ENCODE measurements at regions of chr3 and their contacts with region 1.

Region 1: GRCh38 chr3:186097663-186098451 is 11.0 kb downstream of the ETV5 start:
- H3K4me3 Mint-ChIP-seq: peak overlapping the region; percentile 61
- H3K27ac Mint-ChIP-seq: peak overlapping the region; percentile 100
- H3K4me1 Mint-ChIP-seq: peaks cover 61% of the 10 kb centered on the region
- H3K27me3 Mint-ChIP-seq: peaks cover 31% of the 10 kb centered on the region

Region 2: GRCh38 chr3:186108941-186109865 is 11.3 kb after region 1 on chr3 and contains the start of gene ETV5:
- intact Hi-C with region 1: loop called (anchors 1 kb)
- H3K4me3 Mint-ChIP-seq: peak within 1 kb of the TSS; percentile 85
- H3K27ac Mint-ChIP-seq: peak within 1 kb of the TSS; percentile 89
- H3K4me1 Mint-ChIP-seq: peaks cover 52% of the 10 kb centered on the region
- H3K27me3 Mint-ChIP-seq: peaks cover 73% of the 10 kb centered on the region

Region 3: GRCh38 chr3:186152889-186153292 is 55.0 kb after region 1 on chr3:
- intact Hi-C with region 1: loop called (anchors 2 kb)
- H3K4me3 Mint-ChIP-seq: no peak overlapping the region
- H3K27ac Mint-ChIP-seq: peak overlapping the region; percentile 65
- H3K4me1 Mint-ChIP-seq: peaks cover 39% of the 10 kb centered on the region
- H3K27me3 Mint-ChIP-seq: peaks cover 20% of the 10 kb centered on the region

Region 4: GRCh38 chr3:186185194-186185787 is 87.4 kb after region 1 on chr3:
- intact Hi-C with region 1: loop called (anchors 1 kb)
- H3K4me3 Mint-ChIP-seq: peak overlapping the region; percentile 22
- H3K27ac Mint-ChIP-seq: peak overlapping the region; percentile 85
- H3K4me1 Mint-ChIP-seq: peaks cover 68% of the 10 kb centered on the region
- H3K27me3 Mint-ChIP-seq: no peaks in the 10 kb centered on the region

Region 5: DNA sequence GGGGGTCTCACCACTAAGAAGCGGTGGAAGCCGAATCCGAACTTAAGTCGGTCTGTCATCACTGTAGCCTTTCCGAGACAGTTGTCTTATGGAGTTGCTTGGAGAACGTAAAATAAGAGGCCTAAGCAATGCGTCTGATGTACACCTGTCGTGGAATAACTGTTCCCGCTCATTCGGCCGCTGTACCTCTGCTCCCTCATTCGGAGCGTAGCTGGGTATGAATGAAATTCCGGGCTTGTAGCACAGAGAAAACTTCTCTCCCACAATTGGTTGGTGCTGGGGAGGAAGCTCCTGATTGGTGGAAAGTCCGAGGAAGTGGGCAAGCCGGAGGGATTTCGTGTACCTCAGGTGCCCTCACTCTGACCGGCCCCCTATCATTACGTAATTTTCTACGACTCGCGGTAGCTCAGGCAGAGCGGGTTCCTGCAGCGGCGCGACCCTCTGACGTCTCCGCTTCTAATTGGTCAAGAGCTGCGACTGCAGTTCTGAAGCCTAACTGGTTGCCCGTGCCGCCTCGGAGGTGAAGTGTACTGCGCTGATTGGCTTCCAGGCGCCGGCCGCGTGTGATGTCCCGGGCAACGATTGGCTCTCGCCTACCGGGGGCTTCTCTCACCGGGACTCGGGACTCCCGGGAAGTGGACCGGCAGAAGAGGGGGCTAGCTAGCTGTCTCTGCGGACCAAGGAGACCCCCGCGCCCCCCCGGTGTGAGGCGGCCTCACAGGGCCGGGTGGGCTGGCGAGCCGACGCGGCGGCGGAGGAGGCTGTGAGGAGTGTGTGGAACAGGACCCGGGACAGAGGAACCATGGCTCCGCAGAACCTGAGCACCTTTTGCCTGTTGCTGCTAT is 472.5 kb after region 1 on chr3 and contains the start of gene DNAJB11:
- intact Hi-C with region 1: loop called (anchors 10 kb)
- H3K4me3 Mint-ChIP-seq: peak within 1 kb of the TSS; percentile 86
- H3K27ac Mint-ChIP-seq: peak within 1 kb of the TSS; percentile 96
- H3K4me1 Mint-ChIP-seq: peaks cover 53% of the 10 kb centered on the region
- H3K27me3 Mint-ChIP-seq: no peaks in the 10 kb centered on the region

Region 6: GRCh38 chr3:186772701-186773424 is 675.0 kb after region 1 on chr3:
- intact Hi-C with region 1: loop called (anchors 10 kb)
- H3K4me3 Mint-ChIP-seq: peak overlapping the region; percentile 88
- H3K27ac Mint-ChIP-seq: peak overlapping the region; percentile 90
- H3K4me1 Mint-ChIP-seq: peaks cover 18% of the 10 kb centered on the region
- H3K27me3 Mint-ChIP-seq: peaks cover 3% of the 10 kb centered on the region

Region 7: DNA sequence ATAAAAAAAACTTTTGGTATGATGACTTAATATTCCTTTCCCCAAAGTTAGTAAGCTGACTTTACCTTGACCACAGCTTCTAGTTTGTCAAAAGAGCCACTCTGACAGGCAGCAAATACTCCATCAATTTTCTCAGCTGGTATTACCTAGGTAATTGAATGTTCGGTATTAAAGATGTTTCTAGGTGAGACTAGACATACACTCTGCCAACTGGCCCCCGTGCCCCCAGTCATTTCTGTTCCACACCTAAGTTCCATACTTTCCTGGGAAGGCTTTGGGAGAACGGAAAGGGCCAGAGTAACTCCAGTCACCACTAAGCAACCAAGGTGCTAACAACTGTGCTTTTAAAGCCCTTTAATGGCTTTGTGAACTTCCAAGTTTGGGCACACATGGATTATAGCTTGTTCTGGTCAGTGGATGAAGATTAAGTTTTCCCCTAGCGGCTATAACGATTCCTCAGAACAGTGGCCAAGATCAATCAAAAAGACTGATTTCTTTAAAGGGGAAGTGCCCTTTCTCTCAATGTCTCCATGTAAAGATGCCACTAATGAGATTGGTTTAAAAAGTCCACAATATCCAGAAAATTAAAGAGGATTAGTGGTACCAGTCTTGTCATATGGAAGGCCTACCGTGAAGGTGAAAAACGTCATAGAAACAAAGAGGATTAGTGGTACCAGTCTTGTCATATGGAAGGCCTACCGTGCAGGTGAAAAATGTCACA is 692.6 kb after region 1 on chr3:
- intact Hi-C with region 1: no loop called
- H3K4me3 Mint-ChIP-seq: no peak overlapping the region
- H3K27ac Mint-ChIP-seq: no peak overlapping the region
- H3K4me1 Mint-ChIP-seq: peaks cover 22% of the 10 kb centered on the region
- H3K27me3 Mint-ChIP-seq: no peaks in the 10 kb centered on the region